ENCODE measurements at regions of chr12 and their contacts with region 1.

Region 1: DNA sequence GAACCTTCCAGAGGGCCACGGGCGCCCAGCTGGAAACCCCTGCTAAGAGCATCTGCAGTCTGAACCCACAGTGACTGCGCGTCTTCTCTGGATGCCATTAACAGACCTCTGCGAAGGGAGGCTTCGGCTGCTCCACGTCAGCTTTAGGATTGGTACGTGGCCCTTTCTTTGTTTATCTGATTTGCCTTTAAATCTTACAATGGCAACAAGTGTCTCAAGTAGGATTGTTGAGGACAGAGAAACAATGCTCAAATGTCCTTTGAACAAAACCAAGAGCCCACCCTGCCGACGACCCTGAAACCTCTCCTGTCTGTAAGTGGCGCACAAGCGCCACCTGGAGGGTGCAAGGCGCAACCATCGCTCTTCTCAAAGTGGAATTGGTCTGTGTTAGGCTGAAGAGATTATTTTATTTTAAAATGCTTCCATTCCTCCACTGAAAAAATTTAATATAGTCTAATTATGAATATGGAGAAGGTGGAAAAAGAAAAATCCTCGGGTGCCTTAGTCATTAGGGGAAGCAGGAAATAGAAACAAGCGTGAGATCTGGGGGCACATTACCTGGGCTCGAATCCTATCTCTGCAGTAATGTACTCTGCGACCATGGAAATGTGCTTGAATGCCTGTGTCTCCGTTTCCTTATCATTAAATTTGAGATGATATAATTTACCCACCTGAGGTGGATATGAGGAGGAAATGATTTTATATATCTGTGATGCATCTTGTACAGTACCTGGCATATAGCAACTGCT is 82.6 kb upstream of the PTPRB start:
- DNase-seq: peak in 4 of 5 donors; percentile 55 to 80 (median 64)
- H3K4me3 ChIP-seq: peak overlapping the region; percentile 45 to 63 (median 51)
- H3K27ac ChIP-seq: no peak overlapping the region
- H3K4me1 ChIP-seq: peaks cover 0 to 3% (median 0%) of the 10 kb centered on the region in 3 donors
- H3K27me3 ChIP-seq: no peaks in the 10 kb centered on the region
- CTCF ChIP-seq: peak; percentile 70

Region 2: DNA sequence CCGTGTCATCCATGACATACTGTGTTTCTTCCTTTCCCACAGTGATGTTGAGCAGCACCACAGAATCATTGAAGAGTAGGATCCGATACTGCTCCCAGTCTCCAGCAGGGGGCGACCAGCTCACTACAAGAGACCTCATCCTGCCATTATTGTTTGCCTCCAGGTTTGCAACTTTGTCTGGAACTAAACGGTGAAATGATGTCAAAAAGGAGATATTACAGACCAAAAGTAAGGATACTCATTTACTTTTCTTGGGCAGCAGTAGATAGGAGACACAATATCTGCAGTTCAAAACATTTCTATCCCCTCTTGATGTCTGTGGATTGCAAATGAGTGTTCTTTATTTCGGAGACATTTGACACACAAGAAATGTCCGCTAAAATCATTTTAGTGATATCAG is 129.8 kb before region 1 on chr12:
- intact Hi-C with region 1: loop called (anchors 5 kb)
- DNase-seq: peak; percentile 65 to 84 (median 68)
- H3K4me3 ChIP-seq: no peak overlapping the region
- H3K27ac ChIP-seq: no peak overlapping the region
- H3K4me1 ChIP-seq: no peaks in the 10 kb centered on the region
- H3K27me3 ChIP-seq: no peaks in the 10 kb centered on the region
- CTCF ChIP-seq: peak; percentile 94